Mammary epithelial cell (primary cell): ENCODE measurements at regions of chr6 and their contacts with region 1.

Region 1: GRCh38 chr6:68967549-68968300 is 332.6 kb downstream of the ADGRB3 start:
- DNase-seq: peak; percentile 17
- H3K4me3 ChIP-seq: no peak overlapping the region
- H3K27ac ChIP-seq: no peak overlapping the region
- H3K4me1 ChIP-seq: no peaks in the 10 kb centered on the region
- H3K27me3 ChIP-seq: no peaks in the 10 kb centered on the region
- CTCF ChIP-seq: peak; percentile 87 to 88

Region 2: DNA sequence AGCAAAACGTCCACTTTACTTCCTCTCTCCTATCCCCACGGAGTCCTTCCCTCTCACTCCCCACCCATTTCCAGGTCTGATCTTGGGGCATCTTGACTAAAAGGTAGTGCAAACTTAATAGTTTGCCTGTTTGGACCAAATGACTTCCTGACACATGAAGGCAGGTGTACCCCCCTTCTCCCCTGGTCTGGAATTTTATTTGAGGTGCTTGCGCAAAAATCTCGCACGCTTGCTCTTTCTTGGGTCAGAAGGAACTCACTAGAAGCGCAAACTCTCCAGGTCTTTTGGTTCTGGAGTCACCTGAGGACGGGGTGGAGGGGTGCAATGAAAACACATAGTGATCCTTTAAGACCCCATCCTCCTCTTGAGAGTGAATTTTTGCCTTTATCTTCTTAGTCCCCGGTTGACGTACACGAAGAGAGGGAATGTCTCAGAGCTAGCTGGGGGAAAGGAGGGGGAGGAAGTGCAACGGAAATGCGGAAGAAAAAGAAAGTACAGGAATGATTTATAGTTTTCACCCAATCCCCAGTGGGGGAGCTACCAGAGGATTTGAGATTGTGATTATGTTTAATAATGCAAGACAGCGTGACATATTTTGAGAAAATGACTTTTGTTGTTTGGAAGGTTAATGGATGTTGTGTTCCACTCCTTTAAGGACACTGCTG is 327.8 kb before region 1 on chr6:
- CTCF ChIA-PET with region 1: no interaction called
- dilution Hi-C with region 1: no loop called
- in situ Hi-C with region 1: no loop called
- intact Hi-C with region 1: loop called (anchors 2 kb)
- DNase-seq: no peak
- H3K4me3 ChIP-seq: no peak overlapping the region
- H3K27ac ChIP-seq: no peak overlapping the region
- H3K4me1 ChIP-seq: no peaks in the 10 kb centered on the region
- H3K27me3 ChIP-seq: peaks cover 8% of the 10 kb centered on the region
- CTCF ChIP-seq: no peak

Region 3: DNA sequence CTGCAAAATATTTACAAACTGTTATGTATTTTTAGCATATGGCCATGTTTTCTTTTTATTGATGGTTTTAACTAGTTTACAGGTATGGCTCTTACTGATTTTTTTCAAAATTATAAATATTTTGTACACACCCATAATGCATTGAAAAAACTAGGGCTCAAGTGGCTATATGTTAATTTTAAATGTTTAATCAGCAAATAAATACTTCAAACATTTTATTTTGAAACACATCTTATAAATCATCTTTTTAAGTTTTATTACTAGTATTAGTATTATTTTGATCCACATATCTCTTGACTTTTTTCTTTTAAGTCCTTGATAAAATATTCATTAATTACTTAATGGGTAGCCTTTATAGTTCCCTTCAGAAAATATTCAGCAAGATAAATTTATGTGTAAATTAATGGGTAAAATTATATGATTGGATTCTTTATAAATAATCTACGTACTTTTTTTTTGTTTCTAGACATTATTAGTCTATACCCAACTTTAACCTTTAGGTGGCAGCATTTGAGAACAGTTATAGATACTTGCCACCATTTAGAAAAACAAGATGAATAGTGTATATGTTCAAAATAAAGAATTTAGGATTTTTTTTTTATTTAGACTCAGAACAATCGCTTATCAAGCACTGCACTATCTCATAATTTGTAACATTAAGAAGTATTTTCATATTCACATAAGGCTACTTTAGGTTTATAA is 90.8 kb before region 1 on chr6:
- CTCF ChIA-PET with region 1: no interaction called
- dilution Hi-C with region 1: no loop called
- in situ Hi-C with region 1: no loop called
- intact Hi-C with region 1: loop called (anchors 5 kb)
- DNase-seq: no peak
- H3K4me3 ChIP-seq: no peak overlapping the region
- H3K27ac ChIP-seq: no peak overlapping the region
- H3K4me1 ChIP-seq: no peaks in the 10 kb centered on the region
- H3K27me3 ChIP-seq: no peaks in the 10 kb centered on the region
- CTCF ChIP-seq: peak in 1 of 2 donors; percentile 50